GM10248 (cell line): ENCODE measurements at regions of chr12 and their contacts with region 1.

Region 1: DNA sequence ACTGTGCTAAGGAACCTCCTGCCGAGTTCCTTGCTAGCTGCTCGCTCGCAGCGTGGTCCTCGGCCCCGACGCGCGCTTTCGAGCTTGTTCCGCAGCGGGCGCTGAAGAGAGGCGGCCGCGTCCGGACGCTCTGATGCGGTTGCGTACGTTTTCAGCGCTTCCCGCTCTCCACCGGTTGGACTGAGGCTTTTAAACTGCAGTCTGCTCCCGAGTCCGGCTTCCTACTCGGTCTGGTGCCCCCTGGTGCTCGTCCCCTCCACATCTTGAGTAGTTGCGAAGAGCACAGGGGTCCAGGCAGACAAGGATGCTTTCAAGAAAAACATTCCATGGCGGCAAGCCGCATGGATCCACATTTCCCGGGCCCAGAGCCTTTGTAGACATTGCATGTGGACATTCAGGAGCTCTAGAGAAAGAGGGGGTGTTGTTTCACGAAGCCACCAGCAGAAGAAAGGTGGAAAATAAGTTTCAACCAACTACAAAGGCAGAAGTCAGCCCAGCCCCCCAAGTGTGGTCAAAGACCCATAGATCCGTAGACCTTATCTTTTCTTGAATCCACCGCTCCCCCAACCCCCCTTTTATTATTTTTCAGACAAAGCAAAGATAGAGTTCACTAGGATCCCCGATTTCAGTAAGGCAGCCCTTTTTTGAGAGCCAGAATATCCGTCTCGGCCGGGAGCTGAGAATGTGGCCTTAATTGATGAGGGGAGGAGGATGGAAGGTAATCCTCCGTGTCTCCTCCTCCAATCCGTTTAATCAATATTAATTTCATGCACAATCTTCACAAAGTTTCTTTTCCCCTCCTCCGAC is 984 bp upstream of the WNK1 start:
- DNase-seq: peak; percentile 78
- CTCF ChIP-seq: peak; percentile 68

Region 2: DNA sequence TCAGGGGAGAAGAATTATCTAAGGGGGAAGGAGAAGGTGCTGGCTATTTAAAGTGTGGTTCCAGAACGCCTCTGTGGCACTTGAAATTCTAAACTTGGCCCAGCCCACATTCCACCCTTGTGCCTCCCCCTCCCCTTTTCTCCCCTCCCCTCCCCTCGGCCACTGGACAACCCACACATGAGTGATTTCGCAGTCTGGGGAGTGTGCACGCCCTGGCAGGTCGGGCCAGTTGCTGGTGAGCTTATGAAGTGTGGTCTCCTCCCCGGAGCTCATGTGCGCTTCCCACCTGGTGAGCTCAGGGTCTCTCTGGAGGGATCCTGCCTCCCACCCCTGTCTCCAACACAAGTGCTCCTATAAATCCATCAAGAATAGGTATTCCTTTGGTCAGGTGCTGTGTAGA is 488.6 kb before region 1 on chr12 and contains the start of gene SLC6A13:
- CTCF ChIA-PET with region 1: no interaction called
- POLR2A ChIA-PET with region 1: no interaction called
- DNase-seq: no peak
- CTCF ChIP-seq: no peak

Region 3: DNA sequence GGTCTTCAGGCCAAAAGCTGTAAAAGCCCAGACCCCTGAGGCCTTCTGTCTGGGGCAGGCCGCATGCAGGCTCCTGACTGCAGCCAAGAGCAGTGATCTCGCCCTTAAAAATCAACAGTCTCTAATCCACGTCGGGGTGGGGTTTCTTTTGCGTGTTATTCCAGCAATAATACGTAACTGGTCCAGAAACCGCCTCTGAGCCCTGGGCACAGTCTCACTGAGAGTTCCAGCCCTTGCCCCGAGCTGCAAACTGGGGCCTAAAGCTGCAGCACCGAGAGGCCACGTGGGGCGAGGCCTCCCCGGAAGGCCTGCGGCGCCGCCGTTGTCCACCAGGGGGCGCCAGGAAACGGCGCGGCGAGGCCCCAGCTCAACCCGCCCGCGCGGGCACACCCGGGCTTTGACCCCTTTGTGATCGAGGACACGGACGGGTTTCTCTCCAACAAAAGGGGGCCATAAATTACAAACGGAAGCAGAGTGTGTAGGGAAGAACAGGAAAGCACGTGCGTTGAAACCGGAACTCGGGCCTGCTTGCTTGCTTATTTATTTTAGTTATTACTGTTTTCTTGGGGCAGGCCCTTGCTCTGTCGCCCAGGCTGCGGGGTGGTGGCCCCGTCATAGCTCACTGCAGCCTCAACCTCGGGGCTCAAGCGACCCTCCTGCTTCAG is 175.3 kb before region 1 on chr12:
- CTCF ChIA-PET with region 1: interaction called, 32 read pairs
- POLR2A ChIA-PET with region 1: no interaction called
- DNase-seq: peak; percentile 93
- CTCF ChIP-seq: peak; percentile 96

Region 4: DNA sequence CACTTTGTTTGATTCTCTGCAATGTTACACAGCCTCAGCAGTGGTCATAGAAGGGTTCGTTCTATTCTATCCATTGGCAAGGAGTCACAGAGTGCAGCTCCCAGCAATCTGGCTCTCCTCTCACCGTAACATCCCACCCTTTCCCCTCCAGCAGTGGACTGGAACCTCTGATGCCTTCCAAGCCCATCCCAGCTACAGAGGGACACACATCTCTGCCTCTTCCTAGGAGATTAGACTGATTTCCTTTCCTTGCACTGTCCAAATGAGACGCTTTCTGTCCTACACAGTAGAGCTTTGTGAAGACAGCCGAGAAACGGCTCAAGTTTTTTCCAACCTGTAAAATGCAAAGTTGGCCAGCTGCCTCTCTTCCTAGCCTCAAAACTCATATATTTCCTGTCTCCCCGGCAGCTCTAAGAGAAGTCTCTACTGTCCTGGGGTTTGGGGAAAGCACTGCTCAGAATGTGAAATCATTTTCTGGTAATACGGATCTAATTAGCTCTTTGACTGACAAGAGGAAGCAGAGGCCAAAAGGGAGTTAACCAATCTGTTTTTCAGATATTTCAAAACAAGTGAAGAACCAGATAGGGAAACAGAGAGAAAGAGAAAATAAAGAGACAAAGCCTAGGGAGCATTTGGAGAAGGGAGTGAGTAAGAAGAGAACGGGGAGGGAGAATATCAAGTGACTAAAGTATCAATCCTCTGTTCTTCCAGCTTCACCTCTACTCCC is 88.7 kb before region 1 on chr12:
- CTCF ChIA-PET with region 1: interaction called, 33 read pairs
- POLR2A ChIA-PET with region 1: interaction called, 9 read pairs
- DNase-seq: no peak
- CTCF ChIP-seq: no peak

Region 5: GRCh38 chr12:685388-685787 is 66.0 kb before region 1 on chr12:
- CTCF ChIA-PET with region 1: interaction called, 19 read pairs
- POLR2A ChIA-PET with region 1: interaction called, 6 read pairs
- DNase-seq: peak; percentile 66
- CTCF ChIP-seq: no peak

Region 6: DNA sequence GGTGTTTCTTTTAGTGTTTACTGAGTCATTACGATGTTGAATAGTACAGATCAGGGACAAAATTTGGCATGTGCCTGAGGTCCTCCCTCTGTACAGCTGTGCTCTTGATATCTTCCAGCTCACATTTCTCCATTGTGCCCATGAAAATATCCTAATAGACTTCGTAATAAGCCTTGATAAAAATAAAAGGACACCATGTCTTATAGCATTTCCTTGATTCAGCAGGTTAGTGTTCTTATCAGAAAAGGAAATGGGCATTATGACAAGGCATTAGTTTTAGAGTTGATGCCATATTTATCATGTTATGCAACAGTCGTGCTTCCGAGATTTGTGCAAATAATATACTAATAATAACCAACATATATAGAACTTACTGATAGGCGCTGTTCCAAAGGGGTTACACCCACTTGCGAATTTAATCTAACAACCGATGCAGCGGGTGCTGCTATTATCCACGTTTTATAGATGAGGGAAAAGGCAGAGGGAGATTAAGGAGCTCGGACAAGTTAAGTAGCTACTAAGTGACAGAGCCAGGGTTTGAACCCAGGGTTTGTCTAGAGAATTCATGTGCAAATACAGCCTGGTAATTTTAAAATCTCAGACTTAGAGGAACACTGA is 14.2 kb before region 1 on chr12:
- CTCF ChIA-PET with region 1: interaction called, 27 read pairs
- POLR2A ChIA-PET with region 1: interaction called, 10 read pairs
- DNase-seq: no peak
- CTCF ChIP-seq: no peak

Region 7: GRCh38 chr12:810671-811415 is 59.4 kb after region 1 on chr12:
- CTCF ChIA-PET with region 1: interaction called, 31 read pairs
- POLR2A ChIA-PET with region 1: no interaction called
- DNase-seq: peak; percentile 53
- CTCF ChIP-seq: no peak

Region 8: GRCh38 chr12:865614-866013 is 114.2 kb after region 1 on chr12:
- CTCF ChIA-PET with region 1: no interaction called
- POLR2A ChIA-PET with region 1: no interaction called
- DNase-seq: no peak
- CTCF ChIP-seq: no peak

Region 9: DNA sequence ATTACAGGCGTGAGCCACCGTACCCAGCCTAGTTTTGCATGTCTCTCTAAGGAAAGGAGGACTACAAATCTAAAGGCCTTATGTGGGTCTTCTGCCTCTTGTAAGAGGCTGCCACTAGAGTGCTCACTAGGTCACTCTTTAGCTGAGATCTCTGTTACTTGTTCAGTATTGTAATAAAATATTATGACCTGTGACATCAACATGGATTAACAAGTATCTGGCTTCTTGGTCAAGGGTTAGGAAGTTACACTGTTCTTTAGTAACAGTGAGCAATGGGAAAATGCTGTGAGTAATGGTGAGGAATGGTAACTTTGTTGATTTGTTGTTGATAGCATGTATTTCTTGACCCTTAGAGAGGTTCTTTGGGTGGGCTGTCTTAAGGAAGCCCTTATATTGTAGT is 290.1 kb after region 1 on chr12:
- CTCF ChIA-PET with region 1: no interaction called
- POLR2A ChIA-PET with region 1: no interaction called
- DNase-seq: no peak
- CTCF ChIP-seq: no peak

Region 10: DNA sequence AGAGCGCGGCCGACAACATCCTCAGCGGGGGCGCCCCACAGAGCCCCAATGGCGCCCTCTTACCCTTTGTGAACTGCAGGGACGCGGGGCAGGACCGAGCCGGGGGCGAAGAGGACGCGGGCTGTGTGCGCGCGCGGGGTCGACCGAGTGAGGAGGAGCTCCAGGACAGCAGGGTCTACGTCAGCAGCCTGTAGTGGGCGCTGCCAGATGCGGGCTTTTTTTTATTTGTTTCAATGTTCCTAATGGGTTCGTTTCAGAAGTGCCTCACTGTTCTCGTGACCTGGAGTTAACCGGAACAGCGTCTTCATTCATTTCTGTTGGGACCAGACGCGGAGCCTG is 1939.6 kb after region 1 on chr12:
- CTCF ChIA-PET with region 1: no interaction called
- POLR2A ChIA-PET with region 1: no interaction called
- DNase-seq: no peak
- CTCF ChIP-seq: no peak